Lower leg skin (tissue), 4 donors: ENCODE measurements at regions of chr10 and their contacts with region 1.

Region 1: DNA sequence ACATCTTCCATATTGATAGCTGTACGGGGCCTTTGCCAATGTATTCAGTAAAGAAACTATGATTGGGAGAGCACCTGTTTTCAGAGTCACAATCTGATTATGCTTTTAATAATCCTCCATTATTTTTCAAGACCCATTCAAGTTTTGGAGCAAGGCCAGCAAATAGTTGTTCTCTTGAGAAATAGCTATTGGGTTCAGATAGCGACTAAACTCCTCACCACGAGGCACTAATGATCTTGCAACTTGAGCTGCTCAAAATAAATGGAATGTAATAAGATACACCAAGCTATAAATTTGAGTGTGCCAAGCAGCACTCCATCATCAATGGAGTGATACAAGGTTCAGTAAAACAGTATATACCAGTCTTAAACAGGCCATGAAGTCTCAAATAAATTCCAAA is 7.4 kb upstream of the MALRD1 start:
- DNase-seq: no peak
- H3K4me3 ChIP-seq: no peak overlapping the region
- CTCF ChIP-seq: no peak
- POLR2A ChIP-seq: no peak

Region 2: GRCh38 chr10:19071946-19072345 is 30.8 kb after region 1 on chr10:
- intact Hi-C with region 1: loop called (anchors 1 kb)
- DNase-seq: no peak
- H3K4me3 ChIP-seq: no peak overlapping the region
- CTCF ChIP-seq: no peak
- POLR2A ChIP-seq: no peak

Region 3: GRCh38 chr10:19231034-19231433 is 189.9 kb after region 1 on chr10:
- intact Hi-C with region 1: loop called (anchors 2 kb)
- DNase-seq: no peak
- H3K4me3 ChIP-seq: no peak overlapping the region
- CTCF ChIP-seq: no peak
- POLR2A ChIP-seq: no peak

Region 4: DNA sequence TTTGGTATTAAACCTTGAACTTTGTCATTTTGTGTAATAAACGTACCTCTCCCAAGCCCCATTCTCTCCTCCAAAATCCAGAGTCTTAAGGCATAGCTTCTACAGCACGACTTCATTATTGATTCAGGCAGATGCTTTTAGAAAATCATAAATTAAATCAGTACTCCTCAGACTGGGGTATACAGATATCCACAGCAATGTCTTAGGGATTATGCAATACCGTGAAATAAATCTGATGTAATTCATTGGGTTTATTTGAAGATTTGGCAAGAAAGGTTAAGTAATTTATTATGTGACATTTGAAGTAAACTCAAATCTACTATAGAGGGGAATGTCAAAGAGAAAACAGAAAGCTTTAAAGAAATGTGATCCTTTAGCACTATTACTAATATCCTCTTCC is 528.9 kb after region 1 on chr10:
- intact Hi-C with region 1: no loop called
- DNase-seq: no peak
- H3K4me3 ChIP-seq: no peak overlapping the region
- CTCF ChIP-seq: no peak
- POLR2A ChIP-seq: no peak